Activated B cell treated with CpG ODN at 0.5 μM for 24 hours (primary cell): ENCODE measurements at regions of chr2 and their contacts with region 1.

Region 1: DNA sequence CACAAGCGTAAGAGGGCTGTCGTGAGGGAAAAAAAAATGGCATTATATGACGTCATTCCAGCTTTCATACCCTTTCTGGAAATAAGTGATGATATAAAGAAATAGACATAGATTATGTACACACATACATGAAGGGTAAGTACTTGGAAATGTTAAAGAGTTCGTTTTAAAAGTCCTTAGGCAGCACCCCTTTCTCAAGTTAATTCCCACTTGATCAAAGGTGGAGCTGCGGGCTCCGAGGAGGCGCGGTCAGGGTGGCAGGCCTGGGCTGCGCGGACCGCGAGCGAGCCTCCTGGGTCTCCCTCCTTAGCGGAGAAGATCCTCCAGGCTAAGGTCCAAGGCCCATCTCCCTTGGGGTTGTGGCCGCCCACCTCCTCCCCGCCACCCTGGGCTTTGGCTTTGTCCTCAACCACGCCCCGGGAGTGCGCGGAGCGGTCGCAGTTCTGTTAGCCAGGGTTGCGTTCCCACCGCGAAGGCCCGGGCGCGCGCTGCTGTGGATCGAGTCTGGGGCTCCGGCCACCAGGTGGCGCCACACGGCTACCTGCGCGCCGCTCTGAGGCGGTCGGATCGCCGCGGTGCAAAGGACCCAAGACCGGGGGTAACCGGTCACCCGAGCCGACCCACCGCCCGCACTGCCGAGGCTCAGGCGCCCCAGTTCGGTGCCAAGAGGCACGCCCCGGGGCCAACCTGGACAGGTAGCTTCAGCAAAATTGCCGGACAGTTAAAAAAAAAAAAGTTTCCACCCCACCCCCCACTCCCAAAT is 66.8 kb downstream of the HNRNPLL start:
- DNase-seq: peak; percentile 84
- ATAC-seq: peak; percentile 47
- H3K4me3 Mint-ChIP-seq: peak overlapping the region; percentile 75
- H3K27ac Mint-ChIP-seq: no peak overlapping the region
- H3K4me1 Mint-ChIP-seq: peaks cover 39% of the 10 kb centered on the region
- H3K27me3 Mint-ChIP-seq: peaks cover 11% of the 10 kb centered on the region
- CTCF ChIP-seq: peak; percentile 92

Region 2: DNA sequence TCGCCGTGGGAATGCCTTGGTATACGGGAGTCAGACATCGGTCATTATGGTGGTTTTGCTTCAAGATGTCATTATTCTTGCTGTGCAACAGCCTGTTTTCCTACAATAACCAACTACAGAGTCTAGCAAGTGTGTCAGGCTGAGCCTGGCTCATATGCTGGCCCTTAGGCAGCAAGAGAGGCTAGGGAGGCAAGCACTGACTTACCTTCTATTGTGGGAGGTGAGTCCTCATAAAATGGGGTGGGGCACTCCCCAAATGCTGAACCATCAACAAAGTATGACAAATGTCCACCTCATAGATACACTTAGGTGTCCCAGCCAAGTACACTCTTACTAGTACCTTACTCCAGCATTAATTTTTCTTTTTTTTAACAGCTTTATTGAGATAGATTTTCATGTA is 81.8 kb before region 1 on chr2:
- CTCF ChIA-PET with region 1: no interaction called
- POLR2A ChIA-PET with region 1: no interaction called
- intact Hi-C with region 1: no loop called
- DNase-seq: no peak
- ATAC-seq: no peak
- H3K4me3 Mint-ChIP-seq: no peak overlapping the region
- H3K27ac Mint-ChIP-seq: no peak overlapping the region
- H3K4me1 Mint-ChIP-seq: no peaks in the 10 kb centered on the region
- H3K27me3 Mint-ChIP-seq: peaks cover 14% of the 10 kb centered on the region
- CTCF ChIP-seq: no peak

Region 3: DNA sequence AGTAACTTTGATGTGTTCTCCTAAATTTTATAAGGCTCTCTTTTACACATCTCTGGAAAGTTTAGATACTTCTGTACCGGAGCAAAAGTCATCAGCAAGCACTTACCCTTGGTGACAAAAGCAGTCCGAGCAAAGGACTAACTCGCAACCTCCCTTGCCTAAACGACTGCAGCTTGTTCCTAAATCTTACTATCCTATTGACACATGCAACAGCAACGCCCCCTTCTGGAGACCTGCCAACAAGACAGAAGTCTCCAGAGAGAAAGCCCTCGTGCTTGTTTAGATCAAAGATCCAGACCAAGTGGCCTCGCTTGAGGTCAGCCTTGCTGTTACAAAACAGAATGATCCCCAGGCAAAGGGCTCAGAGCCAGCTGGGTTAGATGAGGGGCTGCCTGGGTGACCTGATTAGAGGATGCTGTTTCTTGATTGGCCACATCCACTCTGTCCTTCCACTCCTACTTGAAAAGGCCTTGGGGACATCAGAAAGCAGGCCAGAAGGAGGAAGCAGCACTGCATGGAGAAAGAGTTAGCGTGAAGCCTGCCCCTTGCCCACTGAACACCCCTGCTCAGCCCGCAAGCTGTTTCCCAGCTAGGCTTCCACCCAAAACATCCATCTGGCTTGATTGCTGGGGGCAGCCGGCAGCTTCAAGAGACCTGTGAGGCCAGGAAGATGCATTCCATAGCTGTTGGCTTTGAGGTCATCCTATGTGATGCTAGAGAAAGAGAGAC is 27.4 kb before region 1 on chr2:
- CTCF ChIA-PET with region 1: interaction called, 17 read pairs
- POLR2A ChIA-PET with region 1: no interaction called
- intact Hi-C with region 1: no loop called
- DNase-seq: peak; percentile 46
- ATAC-seq: peak; percentile 79
- H3K4me3 Mint-ChIP-seq: no peak overlapping the region
- H3K27ac Mint-ChIP-seq: no peak overlapping the region
- H3K4me1 Mint-ChIP-seq: peaks cover 4% of the 10 kb centered on the region
- H3K27me3 Mint-ChIP-seq: no peaks in the 10 kb centered on the region
- CTCF ChIP-seq: no peak

Region 4: GRCh38 chr2:38581193-38582147 is 45.5 kb after region 1 on chr2:
- CTCF ChIA-PET with region 1: interaction called, 16 read pairs
- POLR2A ChIA-PET with region 1: no interaction called
- intact Hi-C with region 1: no loop called
- DNase-seq: no peak
- ATAC-seq: peak; percentile 71
- H3K4me3 Mint-ChIP-seq: no peak overlapping the region
- H3K27ac Mint-ChIP-seq: no peak overlapping the region
- H3K4me1 Mint-ChIP-seq: no peaks in the 10 kb centered on the region
- H3K27me3 Mint-ChIP-seq: peaks cover 15% of the 10 kb centered on the region
- CTCF ChIP-seq: no peak

Region 5: GRCh38 chr2:38602732-38603401 is 66.9 kb after region 1 on chr2 and contains the start of gene HNRNPLL:
- CTCF ChIA-PET with region 1: interaction called, 3 read pairs
- POLR2A ChIA-PET with region 1: no interaction called
- intact Hi-C with region 1: loop called (anchors 1 kb)
- DNase-seq: peak; percentile 84
- ATAC-seq: peak; percentile 87
- H3K4me3 Mint-ChIP-seq: peak within 1 kb of the TSS; percentile 89
- H3K27ac Mint-ChIP-seq: peak within 1 kb of the TSS; percentile 65
- H3K4me1 Mint-ChIP-seq: peaks cover 20% of the 10 kb centered on the region
- H3K27me3 Mint-ChIP-seq: peaks cover 38% of the 10 kb centered on the region
- CTCF ChIP-seq: no peak
- total RNA-seq, gene HNRNPLL: 8.6 and 8.8 TPM in 2 replicates

Region 6: GRCh38 chr2:38740851-38741731 is 205.2 kb after region 1 on chr2:
- CTCF ChIA-PET with region 1: interaction called, 8 read pairs
- POLR2A ChIA-PET with region 1: interaction called, 4 read pairs
- intact Hi-C with region 1: loop called (anchors 1 kb)
- DNase-seq: no peak
- ATAC-seq: peak; percentile 18
- H3K4me3 Mint-ChIP-seq: no peak overlapping the region
- H3K27ac Mint-ChIP-seq: peak overlapping the region; percentile 61
- H3K4me1 Mint-ChIP-seq: peaks cover 29% of the 10 kb centered on the region
- H3K27me3 Mint-ChIP-seq: no peaks in the 10 kb centered on the region
- CTCF ChIP-seq: no peak